ENCODE measurements at regions of chr7 and their contacts with region 1.

Region 1: GRCh38 chr7:157555313-157555712 is 218.5 kb downstream of the DNAJB6 start:
- DNase-seq: peak; percentile 70
- H3K4me3 Mint-ChIP-seq: no peak overlapping the region
- H3K27ac Mint-ChIP-seq: no peak overlapping the region
- H3K4me1 Mint-ChIP-seq: no peaks in the 10 kb centered on the region
- H3K27me3 Mint-ChIP-seq: no peaks in the 10 kb centered on the region
- CTCF ChIP-seq: no peak

Region 2: GRCh38 chr7:157432957-157433576 is 122.2 kb before region 1 on chr7:
- CTCF ChIA-PET with region 1: no interaction called
- intact Hi-C with region 1: loop called (anchors 2 kb)
- DNase-seq: peak; percentile 33
- H3K4me3 Mint-ChIP-seq: no peak overlapping the region
- H3K27ac Mint-ChIP-seq: peak overlapping the region; percentile 70
- H3K4me1 Mint-ChIP-seq: no peaks in the 10 kb centered on the region
- H3K27me3 Mint-ChIP-seq: no peaks in the 10 kb centered on the region
- CTCF ChIP-seq: peak; percentile 67

Region 3: DNA sequence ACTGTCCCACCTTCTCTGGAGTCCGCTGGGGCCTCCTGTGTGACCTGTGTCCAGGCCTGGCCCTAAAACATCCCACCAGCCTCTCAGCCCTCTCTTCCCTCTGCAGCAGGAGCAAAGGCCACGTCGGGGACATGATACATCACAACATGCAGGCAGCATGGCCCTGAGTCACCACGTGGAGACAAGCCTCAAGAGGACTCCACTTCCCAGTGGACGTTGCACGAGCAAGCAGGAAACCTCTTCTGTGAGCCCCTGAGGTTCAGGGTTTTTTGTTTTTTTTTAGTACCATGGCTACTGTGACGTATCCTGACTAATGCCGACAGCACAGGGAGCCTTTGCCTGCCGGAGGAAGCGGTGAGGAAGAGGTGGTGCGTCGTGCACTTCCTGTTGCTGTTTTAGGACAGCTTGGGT is 52.6 kb before region 1 on chr7:
- CTCF ChIA-PET with region 1: no interaction called
- intact Hi-C with region 1: no loop called
- DNase-seq: no peak
- H3K4me3 Mint-ChIP-seq: no peak overlapping the region
- H3K27ac Mint-ChIP-seq: no peak overlapping the region
- H3K4me1 Mint-ChIP-seq: no peaks in the 10 kb centered on the region
- H3K27me3 Mint-ChIP-seq: peaks cover 52% of the 10 kb centered on the region
- CTCF ChIP-seq: no peak

Region 4: DNA sequence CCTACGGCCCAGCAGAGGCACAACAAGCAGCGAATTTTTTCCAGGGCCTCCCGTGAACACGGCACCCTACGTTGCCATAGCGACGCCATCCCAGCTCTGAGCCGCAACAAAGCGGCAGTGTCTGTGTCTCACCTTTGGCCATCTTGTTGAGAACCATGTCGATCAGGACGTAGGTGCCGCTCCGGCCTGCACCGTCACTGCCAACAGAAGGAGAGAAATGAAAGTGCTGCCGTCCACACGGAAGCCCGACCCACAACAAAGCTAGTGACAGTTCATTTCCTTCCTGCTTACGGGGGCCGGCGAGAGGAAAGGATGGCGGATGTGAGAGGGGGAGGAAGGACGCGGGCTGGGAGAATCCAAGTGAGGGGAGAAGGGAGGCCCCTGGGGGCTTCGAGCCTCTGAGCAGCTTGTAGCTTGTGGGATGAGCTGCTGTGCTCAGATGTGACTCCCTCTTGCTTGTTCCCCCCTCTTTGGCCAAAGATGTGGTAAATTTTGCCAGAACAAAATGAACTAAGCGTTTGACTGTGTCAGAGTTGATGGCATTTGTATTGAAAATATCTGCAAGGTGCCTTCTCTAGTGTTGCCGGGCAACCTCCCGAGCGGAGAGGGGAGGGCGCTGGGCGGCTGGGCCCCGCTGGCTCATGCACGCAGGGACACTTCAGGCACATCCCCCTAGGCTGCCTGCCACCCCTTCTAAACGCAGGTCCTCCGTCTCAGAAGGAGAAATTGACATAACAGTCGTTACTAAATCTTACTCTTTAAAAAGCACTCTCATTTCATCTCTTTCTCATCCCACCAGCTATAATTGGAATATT is 13.7 kb after region 1 on chr7:
- CTCF ChIA-PET with region 1: no interaction called
- intact Hi-C with region 1: no loop called
- DNase-seq: peak; percentile 61
- H3K4me3 Mint-ChIP-seq: peak overlapping the region; percentile 68
- H3K27ac Mint-ChIP-seq: no peak overlapping the region
- H3K4me1 Mint-ChIP-seq: peaks cover 11% of the 10 kb centered on the region
- H3K27me3 Mint-ChIP-seq: no peaks in the 10 kb centered on the region
- CTCF ChIP-seq: no peak

Region 5: GRCh38 chr7:157612009-157612663 is 56.8 kb after region 1 on chr7:
- CTCF ChIA-PET with region 1: no interaction called
- intact Hi-C with region 1: no loop called
- DNase-seq: no peak
- H3K4me3 Mint-ChIP-seq: peak overlapping the region; percentile 4
- H3K27ac Mint-ChIP-seq: no peak overlapping the region
- H3K4me1 Mint-ChIP-seq: no peaks in the 10 kb centered on the region
- H3K27me3 Mint-ChIP-seq: no peaks in the 10 kb centered on the region
- CTCF ChIP-seq: no peak

Region 6: GRCh38 chr7:157689269-157690057 is 134.2 kb after region 1 on chr7:
- CTCF ChIA-PET with region 1: interaction called, 3 read pairs
- intact Hi-C with region 1: loop called (anchors 5 kb)
- DNase-seq: no peak
- H3K4me3 Mint-ChIP-seq: no peak overlapping the region
- H3K27ac Mint-ChIP-seq: no peak overlapping the region
- H3K4me1 Mint-ChIP-seq: no peaks in the 10 kb centered on the region
- H3K27me3 Mint-ChIP-seq: no peaks in the 10 kb centered on the region
- CTCF ChIP-seq: no peak

Region 7: GRCh38 chr7:158164101-158165095 is 609.1 kb after region 1 on chr7:
- CTCF ChIA-PET with region 1: no interaction called
- intact Hi-C with region 1: no loop called
- DNase-seq: no peak
- H3K4me3 Mint-ChIP-seq: no peak overlapping the region
- H3K27ac Mint-ChIP-seq: no peak overlapping the region
- H3K4me1 Mint-ChIP-seq: no peaks in the 10 kb centered on the region
- H3K27me3 Mint-ChIP-seq: no peaks in the 10 kb centered on the region
- CTCF ChIP-seq: no peak

Measured in Calu3 (cell line).